PC-3 (cell line): ENCODE measurements at regions of chr7 and their contacts with region 1.

Region 1: GRCh38 chr7:27346531-27347270 is 104.1 kb downstream of the EVX1 start:
- DNase-seq: peak; percentile 99
- ATAC-seq: peak; percentile 91
- H3K4me3 ChIP-seq: peak overlapping the region; percentile 57
- H3K27ac ChIP-seq: peak overlapping the region; percentile 92
- H3K4me1 ChIP-seq: peaks cover 43% of the 10 kb centered on the region
- H3K27me3 ChIP-seq: no peaks in the 10 kb centered on the region
- CTCF ChIP-seq: no peak

Region 2: GRCh38 chr7:27204851-27205337 is 141.8 kb before region 1 on chr7:
- CTCF ChIA-PET with region 1: no interaction called
- POLR2A ChIA-PET with region 1: no interaction called
- intact Hi-C with region 1: loop called (anchors 1 kb)
- DNase-seq: peak; percentile 54
- ATAC-seq: peak; percentile 4
- H3K4me3 ChIP-seq: peak overlapping the region; percentile 75
- H3K27ac ChIP-seq: peak overlapping the region; percentile 92
- H3K4me1 ChIP-seq: peaks cover 50% of the 10 kb centered on the region
- H3K27me3 ChIP-seq: no peaks in the 10 kb centered on the region
- CTCF ChIP-seq: no peak

Region 3: DNA sequence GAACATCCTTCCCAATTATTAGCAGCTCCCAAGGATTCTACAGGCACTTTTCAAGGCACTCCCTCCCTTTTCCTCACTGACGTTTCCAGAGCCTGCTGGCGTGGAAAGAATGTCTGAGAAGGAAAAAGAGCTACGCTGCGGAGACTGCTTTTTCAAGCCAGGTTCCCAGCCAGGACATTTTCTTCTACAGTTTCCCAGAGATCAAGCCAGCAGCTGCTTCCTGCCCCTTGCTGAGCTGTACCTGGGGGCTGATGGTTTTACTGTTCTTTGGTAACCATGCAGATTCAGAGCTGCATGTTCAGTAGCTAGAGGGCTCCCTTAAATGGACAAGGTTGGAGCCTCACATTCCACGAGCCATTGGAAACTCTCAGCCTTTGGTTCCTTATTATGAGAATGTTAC is 29.3 kb after region 1 on chr7:
- CTCF ChIA-PET with region 1: no interaction called
- POLR2A ChIA-PET with region 1: no interaction called
- intact Hi-C with region 1: loop called (anchors 2 kb)
- DNase-seq: no peak
- ATAC-seq: no peak
- H3K4me3 ChIP-seq: no peak overlapping the region
- H3K27ac ChIP-seq: 0 out of 2 replicates have a peak overlapping the region, but pooled peaks have one; percentile 11
- H3K4me1 ChIP-seq: peaks cover 35% of the 10 kb centered on the region
- H3K27me3 ChIP-seq: no peaks in the 10 kb centered on the region
- CTCF ChIP-seq: no peak

Region 4: DNA sequence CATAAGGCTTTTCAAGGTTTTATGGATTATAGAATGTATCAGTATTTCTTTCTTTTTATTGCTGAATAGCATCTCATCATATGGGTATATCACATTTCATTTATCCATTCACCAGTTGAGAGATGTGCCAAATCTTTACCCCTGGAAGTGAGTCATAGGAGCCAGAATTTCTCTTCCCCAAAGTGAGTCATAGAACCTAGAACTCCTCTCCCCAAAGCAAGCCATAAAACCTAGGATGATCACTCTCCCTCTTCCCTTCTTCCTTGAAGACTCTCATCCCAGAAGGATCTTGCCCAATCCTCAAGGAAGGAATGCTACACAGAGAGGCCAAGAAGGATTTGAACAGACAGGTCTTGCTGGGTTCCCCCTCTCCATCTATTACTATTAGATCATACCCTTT is 95.7 kb after region 1 on chr7:
- CTCF ChIA-PET with region 1: no interaction called
- POLR2A ChIA-PET with region 1: no interaction called
- intact Hi-C with region 1: loop called (anchors 2 kb)
- DNase-seq: peak; percentile 94
- ATAC-seq: peak; percentile 91
- H3K4me3 ChIP-seq: no peak overlapping the region
- H3K27ac ChIP-seq: peak overlapping the region; percentile 72
- H3K4me1 ChIP-seq: peaks cover 23% of the 10 kb centered on the region
- H3K27me3 ChIP-seq: no peaks in the 10 kb centered on the region
- CTCF ChIP-seq: no peak

Region 5: GRCh38 chr7:27662490-27663205 is 315.9 kb after region 1 on chr7 and contains the start of gene HIBADH:
- CTCF ChIA-PET with region 1: no interaction called
- POLR2A ChIA-PET with region 1: no interaction called
- intact Hi-C with region 1: loop called (anchors 2 kb)
- DNase-seq: peak; percentile 99
- ATAC-seq: peak; percentile 98
- H3K4me3 ChIP-seq: peak within 1 kb of the TSS; percentile 81
- H3K27ac ChIP-seq: peak within 1 kb of the TSS; percentile 60
- H3K4me1 ChIP-seq: 0 out of 2 replicates have a peak, but pooled peaks cover 7% of the 10 kb centered on the region
- H3K27me3 ChIP-seq: no peaks in the 10 kb centered on the region
- CTCF ChIP-seq: no peak
- total RNA-seq, gene HIBADH: 43.7 and 45.8 TPM in 2 replicates